GM12878 (cell line): ENCODE measurements at regions of chr17 and their contacts with region 1.

Region 1: GRCh38 chr17:75764711-75765421 is at the start of gene GALK1:
- DNase-seq: no peak
- ATAC-seq: peak; percentile 96
- H3K4me3 ChIP-seq: peak within 1 kb of the TSS; percentile 76; the same call in 1 of the 2 replicates
- H3K27ac ChIP-seq: peak within 1 kb of the TSS; percentile 48; the same call in 1 of the 2 replicates
- H3K4me1 ChIP-seq: peaks cover 12% of the 10 kb centered on the region
- H3K27me3 ChIP-seq: no peaks in the 10 kb centered on the region
- CTCF ChIP-seq: peak; percentile 49 to 83 (median 78)
- EP300 ChIP-seq: no peak
- POLR2A ChIP-seq: peak; percentile 83
- RAD21 ChIP-seq: peak; percentile 49
- polyA plus RNA-seq, gene GALK1: 0.21 to 5.9 TPM

Region 2: GRCh38 chr17:75693500-75694481 is 71.1 kb before region 1 on chr17:
- CTCF ChIA-PET with region 1: no interaction called
- POLR2A ChIA-PET with region 1: no interaction called
- RAD21 ChIA-PET with region 1: no interaction called
- SMC1A ChIA-PET with region 1: no interaction called
- in situ Hi-C with region 1: no loop called
- intact Hi-C with region 1: no loop called
- DNase-seq: no peak
- ATAC-seq: no peak
- H3K4me3 ChIP-seq: no peak overlapping the region
- H3K27ac ChIP-seq: no peak overlapping the region
- H3K4me1 ChIP-seq: peaks cover 19% of the 10 kb centered on the region
- H3K27me3 ChIP-seq: no peaks in the 10 kb centered on the region
- CTCF ChIP-seq: no peak
- EP300 ChIP-seq: no peak
- POLR2A ChIP-seq: no peak; the same call in 1 of the 2 replicates
- RAD21 ChIP-seq: no peak

Region 3: DNA sequence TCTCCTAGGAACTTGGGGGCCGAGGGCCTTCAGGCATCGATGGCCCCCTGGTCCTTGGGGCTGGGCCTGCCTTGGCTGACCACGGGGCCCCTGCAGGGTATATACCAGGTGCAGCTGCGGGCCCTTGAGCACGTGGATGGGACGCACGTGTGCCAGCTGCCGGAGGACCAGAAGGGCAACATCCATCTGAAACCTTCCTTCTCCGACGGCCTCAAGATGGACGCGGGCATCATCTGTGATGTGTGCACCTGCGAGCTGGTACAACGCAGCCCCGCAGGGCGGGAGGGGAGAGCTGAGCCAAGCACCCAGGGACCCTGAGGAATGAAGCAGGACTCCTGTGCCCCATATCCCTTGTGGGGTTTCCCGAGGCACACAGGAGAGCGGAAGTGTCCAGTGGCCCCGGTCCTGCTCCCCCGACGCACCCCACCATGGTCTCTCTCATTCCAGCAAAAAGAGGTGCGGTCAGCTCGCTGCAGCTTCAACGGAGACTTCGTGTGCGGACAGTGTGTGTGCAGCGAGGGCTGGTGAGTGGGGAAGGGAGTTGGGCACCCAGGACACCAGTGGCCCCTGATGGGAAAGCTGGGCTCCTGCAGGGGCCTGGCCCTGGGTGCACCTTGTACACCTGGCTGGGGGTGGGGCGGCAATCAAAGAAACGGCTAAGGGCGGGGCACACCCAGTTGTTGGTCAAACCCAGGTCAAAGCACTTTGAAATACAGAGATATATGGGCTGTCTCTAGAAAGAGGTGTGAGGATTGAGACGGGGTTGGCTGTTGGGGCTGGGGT is 33.0 kb before region 1 on chr17:
- CTCF ChIA-PET with region 1: no interaction called
- POLR2A ChIA-PET with region 1: no interaction called
- RAD21 ChIA-PET with region 1: no interaction called
- SMC1A ChIA-PET with region 1: no interaction called
- in situ Hi-C with region 1: no loop called
- intact Hi-C with region 1: no loop called
- DNase-seq: no peak
- ATAC-seq: no peak
- H3K4me3 ChIP-seq: no peak overlapping the region
- H3K27ac ChIP-seq: no peak overlapping the region
- H3K4me1 ChIP-seq: 0 out of 2 replicates have a peak, but pooled peaks cover 3% of the 10 kb centered on the region
- H3K27me3 ChIP-seq: no peaks in the 10 kb centered on the region
- CTCF ChIP-seq: no peak
- EP300 ChIP-seq: no peak
- POLR2A ChIP-seq: no peak
- RAD21 ChIP-seq: no peak

Region 4: GRCh38 chr17:75779231-75779986 is 14.5 kb after region 1 on chr17:
- CTCF ChIA-PET with region 1: interaction called, 32 read pairs
- POLR2A ChIA-PET with region 1: interaction called, 40 read pairs
- RAD21 ChIA-PET with region 1: interaction called, 14 read pairs
- SMC1A ChIA-PET with region 1: interaction called, 11 read pairs
- in situ Hi-C with region 1: no loop called
- intact Hi-C with region 1: no loop called
- DNase-seq: peak; percentile 100
- ATAC-seq: peak; percentile 81
- H3K4me3 ChIP-seq: peak overlapping the region; percentile 88
- H3K27ac ChIP-seq: peak overlapping the region; percentile 90
- H3K4me1 ChIP-seq: peaks cover 16% of the 10 kb centered on the region
- H3K27me3 ChIP-seq: no peaks in the 10 kb centered on the region
- CTCF ChIP-seq: no peak
- EP300 ChIP-seq: peak in 1 of 2 experiments; percentile 24; a peak in 1 of 4 replicates
- POLR2A ChIP-seq: peak; percentile 100
- RAD21 ChIP-seq: no peak

Region 5: DNA sequence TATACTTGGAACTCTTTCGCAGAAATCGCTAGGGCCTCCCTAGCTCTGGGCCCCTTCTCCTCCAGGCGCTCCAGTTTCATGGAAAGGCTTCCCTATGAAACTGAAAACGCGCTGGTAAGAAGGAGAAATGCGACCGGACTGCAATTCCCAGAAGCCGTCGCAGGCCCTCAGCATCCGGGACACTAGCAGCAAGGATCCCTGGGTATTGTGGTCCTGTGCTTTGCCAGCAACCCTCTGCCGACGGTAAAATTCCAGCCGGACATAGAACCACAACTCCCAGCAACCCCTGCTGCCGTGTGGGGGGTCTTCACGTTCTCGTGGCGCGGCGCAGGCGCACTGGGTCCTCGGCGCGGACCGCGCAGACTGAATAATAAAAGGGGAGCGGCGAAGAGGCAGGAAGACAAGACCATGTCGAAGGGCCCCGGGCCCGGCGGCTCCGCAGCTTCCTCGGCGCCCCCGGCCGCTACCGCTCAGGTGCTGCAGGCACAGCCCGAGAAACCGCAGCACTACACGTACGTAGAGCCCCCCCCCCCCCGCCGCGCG is 19.7 kb after region 1 on chr17 and contains the start of gene UNK:
- CTCF ChIA-PET with region 1: interaction called, 26 read pairs
- POLR2A ChIA-PET with region 1: interaction called, 39 read pairs
- RAD21 ChIA-PET with region 1: interaction called, 14 read pairs
- SMC1A ChIA-PET with region 1: interaction called, 6 read pairs
- in situ Hi-C with region 1: no loop called
- intact Hi-C with region 1: no loop called
- DNase-seq: peak; percentile 96
- ATAC-seq: peak; percentile 80
- H3K4me3 ChIP-seq: peak within 1 kb of the TSS; percentile 79
- H3K27ac ChIP-seq: peak within 1 kb of the TSS; percentile 97
- H3K4me1 ChIP-seq: peaks cover 22% of the 10 kb centered on the region
- H3K27me3 ChIP-seq: no peaks in the 10 kb centered on the region
- CTCF ChIP-seq: no peak
- EP300 ChIP-seq: no peak
- POLR2A ChIP-seq: no peak
- RAD21 ChIP-seq: no peak
- polyA plus RNA-seq, gene UNK: 8.9 to 11.9 TPM

Region 6: DNA sequence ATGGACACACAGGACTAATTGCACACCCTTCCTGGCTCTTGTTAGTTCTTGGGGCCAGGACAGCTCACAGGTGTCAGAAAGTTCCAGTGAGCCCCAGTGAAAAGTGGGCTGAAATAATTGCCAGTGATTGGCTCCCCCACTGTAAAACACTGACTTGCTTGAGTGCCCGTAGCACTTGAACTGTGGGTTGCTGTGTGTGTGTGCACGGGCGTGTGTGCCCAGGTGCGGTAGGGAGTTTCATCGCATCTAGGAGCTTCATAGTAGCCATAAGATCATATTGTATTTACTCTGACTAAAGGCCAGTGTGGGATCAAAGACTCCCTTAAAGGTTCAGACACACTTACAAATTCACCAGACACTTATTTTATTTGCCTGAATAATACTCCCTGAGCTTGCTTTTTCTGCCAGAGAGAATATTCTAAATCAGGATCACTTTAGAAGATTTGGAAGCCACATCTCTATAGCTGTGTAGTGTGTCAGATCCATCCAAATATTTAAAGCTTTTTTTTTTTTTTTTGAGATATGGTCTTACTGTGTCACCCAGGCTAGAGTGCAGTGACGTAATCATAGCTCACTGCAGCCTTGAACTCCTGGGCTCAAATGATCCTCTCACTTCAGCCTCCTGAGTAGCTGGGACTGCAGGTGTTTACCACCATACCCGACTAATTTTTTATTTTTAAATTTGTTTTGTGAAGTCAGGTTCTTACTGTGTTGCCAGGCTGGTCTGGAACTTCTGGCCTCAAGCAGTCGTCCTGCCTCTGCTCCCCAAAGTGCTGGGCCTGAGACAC is 31.1 kb after region 1 on chr17:
- CTCF ChIA-PET with region 1: interaction called, 4 read pairs
- POLR2A ChIA-PET with region 1: interaction called, 5 read pairs
- RAD21 ChIA-PET with region 1: interaction called, 4 read pairs
- SMC1A ChIA-PET with region 1: interaction called, 10 read pairs
- in situ Hi-C with region 1: no loop called
- intact Hi-C with region 1: no loop called
- DNase-seq: no peak
- ATAC-seq: no peak
- H3K4me3 ChIP-seq: no peak overlapping the region
- H3K27ac ChIP-seq: no peak overlapping the region
- H3K4me1 ChIP-seq: no peaks in the 10 kb centered on the region
- H3K27me3 ChIP-seq: no peaks in the 10 kb centered on the region
- CTCF ChIP-seq: no peak
- EP300 ChIP-seq: no peak
- POLR2A ChIP-seq: no peak
- RAD21 ChIP-seq: no peak

Region 7: DNA sequence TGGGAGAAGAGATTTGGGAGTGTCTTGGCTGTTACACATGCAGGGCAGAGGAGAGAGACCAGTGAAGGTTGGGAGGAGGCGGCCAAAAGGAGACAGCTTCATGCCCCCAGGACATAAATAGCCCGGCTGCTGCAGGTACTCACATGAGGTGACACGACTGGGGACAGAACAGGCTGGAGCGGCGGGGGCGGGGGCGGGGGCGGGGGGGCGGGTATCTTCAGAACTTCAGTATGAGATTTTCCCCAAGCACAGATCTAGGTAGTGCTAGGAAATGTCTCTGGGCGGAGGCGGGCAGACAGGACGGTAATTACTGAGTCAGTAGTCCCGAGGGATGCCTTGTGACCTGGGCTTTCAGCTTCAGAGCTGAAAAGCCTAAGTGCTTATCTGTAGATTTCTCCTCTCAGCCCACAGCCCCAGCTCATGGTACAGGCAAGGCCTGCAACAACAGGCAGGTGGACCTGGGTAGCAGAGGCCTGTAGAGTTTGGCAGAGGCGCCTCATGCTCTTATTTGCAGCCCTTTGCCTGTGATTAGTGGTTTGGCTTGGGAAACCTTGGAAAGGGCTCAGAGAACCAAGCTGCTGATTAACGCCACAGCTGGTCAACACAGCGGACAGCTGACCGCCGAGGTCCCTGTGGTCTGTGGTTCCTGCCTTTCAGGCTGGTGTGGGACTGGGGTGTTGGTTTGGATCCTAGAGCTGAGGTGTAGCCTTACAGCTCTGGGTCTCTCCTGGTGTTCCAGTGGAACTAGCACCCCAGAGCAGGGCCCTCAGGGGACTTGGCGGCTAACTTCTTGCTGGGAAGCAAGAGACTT is 44.2 kb after region 1 on chr17:
- CTCF ChIA-PET with region 1: interaction called, 5 read pairs
- POLR2A ChIA-PET with region 1: interaction called, 12 read pairs
- RAD21 ChIA-PET with region 1: interaction called, 6 read pairs
- SMC1A ChIA-PET with region 1: interaction called, 6 read pairs
- in situ Hi-C with region 1: no loop called
- intact Hi-C with region 1: no loop called
- DNase-seq: peak; percentile 57
- ATAC-seq: peak; percentile 90
- H3K4me3 ChIP-seq: no peak overlapping the region
- H3K27ac ChIP-seq: 0 out of 2 replicates have a peak overlapping the region, but pooled peaks have one; percentile 6
- H3K4me1 ChIP-seq: peaks cover 9% of the 10 kb centered on the region
- H3K27me3 ChIP-seq: no peaks in the 10 kb centered on the region
- CTCF ChIP-seq: no peak
- EP300 ChIP-seq: no peak
- POLR2A ChIP-seq: no peak
- RAD21 ChIP-seq: no peak

Region 8: DNA sequence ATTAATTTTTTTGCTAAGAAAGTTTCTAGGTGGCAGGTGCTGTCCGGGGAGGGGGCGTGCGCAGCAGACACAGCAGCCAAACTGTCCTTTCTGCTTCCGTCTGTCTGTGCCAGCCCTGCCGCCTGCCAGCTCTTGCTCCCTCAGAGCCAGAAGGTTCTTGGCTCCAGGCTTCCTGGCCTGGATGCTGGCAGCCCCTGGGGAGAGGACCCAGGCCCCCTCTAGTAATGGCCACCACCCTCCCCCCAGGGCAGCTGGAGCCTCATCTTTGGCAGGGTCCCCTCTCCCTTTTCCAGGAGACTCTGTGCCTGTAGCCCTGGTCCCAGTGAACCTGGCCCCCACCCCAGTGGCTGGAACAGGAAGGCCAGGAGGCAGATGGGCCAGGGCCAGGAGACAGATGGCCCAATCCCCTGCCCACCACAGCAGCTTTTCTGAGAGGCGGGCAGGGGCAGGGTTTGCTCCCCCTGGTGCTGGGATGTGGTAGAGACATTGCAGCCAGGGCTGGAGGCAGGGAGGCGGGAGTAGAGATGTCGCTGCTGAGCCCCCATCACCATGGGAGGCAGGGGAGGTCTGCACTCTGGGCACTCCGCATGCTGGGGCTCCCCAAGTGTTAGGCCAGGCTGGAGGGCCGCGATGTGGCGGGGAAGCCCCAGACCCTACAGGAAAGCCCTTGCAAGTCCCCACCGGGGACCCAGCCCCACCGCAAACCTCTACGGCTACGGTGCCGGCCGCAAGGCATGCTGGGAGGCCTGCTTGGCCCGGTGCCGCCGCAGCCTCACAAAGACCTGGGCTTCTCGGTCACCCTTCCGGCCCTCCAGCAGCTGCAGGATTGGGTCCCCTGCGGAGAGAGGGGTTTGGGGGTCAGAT is 62.6 kb after region 1 on chr17:
- CTCF ChIA-PET with region 1: interaction called, 63 read pairs
- POLR2A ChIA-PET with region 1: interaction called, 7 read pairs
- RAD21 ChIA-PET with region 1: interaction called, 8 read pairs
- SMC1A ChIA-PET with region 1: interaction called, 10 read pairs
- in situ Hi-C with region 1: no loop called
- intact Hi-C with region 1: no loop called
- DNase-seq: no peak
- ATAC-seq: peak; percentile 79
- H3K4me3 ChIP-seq: no peak overlapping the region
- H3K27ac ChIP-seq: no peak overlapping the region
- H3K4me1 ChIP-seq: no peaks in the 10 kb centered on the region
- H3K27me3 ChIP-seq: no peaks in the 10 kb centered on the region
- CTCF ChIP-seq: peak; percentile 53 to 73 (median 59)
- EP300 ChIP-seq: no peak
- POLR2A ChIP-seq: peak; percentile 68
- RAD21 ChIP-seq: peak; percentile 36; the same call in 1 of the 2 replicates

Region 9: GRCh38 chr17:75896415-75897159 is 131.7 kb after region 1 on chr17 and contains the start of gene TRIM65:
- CTCF ChIA-PET with region 1: interaction called, 9 read pairs
- POLR2A ChIA-PET with region 1: no interaction called
- RAD21 ChIA-PET with region 1: interaction called, 14 read pairs
- SMC1A ChIA-PET with region 1: interaction called, 5 read pairs
- in situ Hi-C with region 1: no loop called
- intact Hi-C with region 1: no loop called
- DNase-seq: no peak
- ATAC-seq: peak; percentile 91
- H3K4me3 ChIP-seq: peak within 1 kb of the TSS; percentile 89
- H3K27ac ChIP-seq: peak within 1 kb of the TSS; percentile 72
- H3K4me1 ChIP-seq: peaks cover 6% of the 10 kb centered on the region
- H3K27me3 ChIP-seq: no peaks in the 10 kb centered on the region
- CTCF ChIP-seq: peak; percentile 27 to 74 (median 39); a peak in 4 of 6 replicates
- EP300 ChIP-seq: no peak
- POLR2A ChIP-seq: peak; percentile 93
- RAD21 ChIP-seq: peak; percentile 38; the same call in 1 of the 2 replicates
- polyA plus RNA-seq, gene TRIM65: 1.4 to 3.8 TPM

Region 10: GRCh38 chr17:76072148-76072858 is 307.4 kb after region 1 on chr17 and contains the start of gene SRP68:
- CTCF ChIA-PET with region 1: no interaction called
- POLR2A ChIA-PET with region 1: no interaction called
- RAD21 ChIA-PET with region 1: no interaction called
- SMC1A ChIA-PET with region 1: no interaction called
- in situ Hi-C with region 1: no loop called
- intact Hi-C with region 1: no loop called
- DNase-seq: peak; percentile 59
- ATAC-seq: peak; percentile 99
- H3K4me3 ChIP-seq: peak within 1 kb of the TSS; percentile 76
- H3K27ac ChIP-seq: peak within 1 kb of the TSS; percentile 81
- H3K4me1 ChIP-seq: peaks cover 3% of the 10 kb centered on the region; the same call in 1 of the 2 replicates
- H3K27me3 ChIP-seq: peaks cover 4 to 24% of the 10 kb centered on the region in 2 experiments; a peak in 3 of 4 replicates
- CTCF ChIP-seq: no peak
- EP300 ChIP-seq: no peak
- POLR2A ChIP-seq: peak; percentile 92
- RAD21 ChIP-seq: no peak
- polyA plus RNA-seq, gene SRP68: 29.5 to 41.9 TPM